Esophagus squamous epithelium (tissue), 5 donors: ENCODE measurements at regions of chr4 and their contacts with region 1.

Region 1: GRCh38 chr4:83639849-83640493 is 104.1 kb downstream of the GPAT3 start:
- DNase-seq: no peak
- H3K4me3 ChIP-seq: no peak overlapping the region
- H3K27ac ChIP-seq: no peak overlapping the region
- H3K4me1 ChIP-seq: peaks cover 0 to 8% (median 0%) of the 10 kb centered on the region in 3 donors
- H3K27me3 ChIP-seq: peaks cover 0 to 8% (median 0%) of the 10 kb centered on the region in 4 donors
- CTCF ChIP-seq: peak; percentile 51 to 82 (median 76)
- POLR2A ChIP-seq: no peak

Region 2: DNA sequence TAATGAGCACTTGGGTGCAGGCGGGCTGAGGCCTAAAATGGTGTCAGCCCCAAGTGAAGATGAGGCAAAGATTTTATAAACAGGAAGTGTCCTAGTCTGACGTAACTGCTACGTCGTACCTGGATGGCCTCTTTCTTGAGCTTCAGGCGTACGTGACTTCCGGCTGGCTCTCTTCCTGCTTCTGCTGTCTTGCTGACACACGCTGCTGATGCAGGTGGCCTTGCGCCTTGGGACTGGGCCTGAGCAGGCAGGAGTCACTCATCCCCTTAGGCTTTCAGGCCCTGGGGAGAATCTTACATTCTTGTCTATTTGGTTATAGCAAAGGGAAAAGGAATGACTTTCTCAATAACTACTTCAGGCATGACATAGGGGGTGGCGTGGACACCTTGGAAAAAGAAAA is 135.0 kb before region 1 on chr4:
- intact Hi-C with region 1: loop called (anchors 5 kb)
- DNase-seq: no peak
- H3K4me3 ChIP-seq: no peak overlapping the region
- H3K27ac ChIP-seq: no peak overlapping the region
- H3K4me1 ChIP-seq: no peaks in the 10 kb centered on the region
- H3K27me3 ChIP-seq: no peaks in the 10 kb centered on the region
- CTCF ChIP-seq: no peak
- POLR2A ChIP-seq: no peak

Region 3: DNA sequence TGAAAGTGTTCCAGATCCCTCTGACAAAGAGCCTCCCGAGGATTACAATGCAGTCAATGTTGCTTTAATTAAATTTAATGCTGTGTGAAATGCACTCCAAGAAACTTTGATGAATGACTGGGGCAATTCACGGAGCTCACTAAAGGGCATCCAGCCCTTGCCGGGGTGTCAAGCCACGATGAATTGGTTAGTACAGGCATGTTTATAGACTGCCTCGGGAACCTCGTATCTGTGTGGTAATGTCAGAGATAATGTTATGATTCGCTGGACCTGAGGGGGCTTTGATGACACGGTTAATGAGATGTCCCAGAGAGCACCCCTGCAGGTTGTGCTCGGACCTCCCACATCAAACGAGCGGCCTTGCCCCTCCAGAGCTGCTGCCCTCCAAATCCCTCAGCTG is 430.3 kb after region 1 on chr4:
- intact Hi-C with region 1: no loop called
- DNase-seq: no peak
- H3K4me3 ChIP-seq: no peak overlapping the region
- H3K27ac ChIP-seq: no peak overlapping the region
- H3K4me1 ChIP-seq: no peaks in the 10 kb centered on the region
- H3K27me3 ChIP-seq: no peaks in the 10 kb centered on the region
- CTCF ChIP-seq: no peak
- POLR2A ChIP-seq: no peak